Aorta (tissue), 5 donors: ENCODE measurements at regions of chr11 and their contacts with region 1.

Region 1: GRCh38 chr11:84524422-84525051 is 1102.6 kb downstream of the DLG2 start:
- DNase-seq: no peak
- ATAC-seq: peak; percentile 52
- H3K4me3 ChIP-seq: no peak overlapping the region
- H3K27ac ChIP-seq: no peak overlapping the region
- H3K4me1 ChIP-seq: no peaks in the 10 kb centered on the region
- H3K27me3 ChIP-seq: no peaks in the 10 kb centered on the region

Region 2: GRCh38 chr11:84384731-84385130 is 139.8 kb before region 1 on chr11:
- intact Hi-C with region 1: loop called (anchors 5 to 10 kb)
- DNase-seq: no peak
- ATAC-seq: no peak
- H3K4me3 ChIP-seq: no peak overlapping the region
- H3K27ac ChIP-seq: no peak overlapping the region
- H3K4me1 ChIP-seq: no peaks in the 10 kb centered on the region
- H3K27me3 ChIP-seq: no peaks in the 10 kb centered on the region